Activated CD4-positive, alpha-beta memory T cell treated with anti-CD3 and anti-CD28 coated beads for 36 hours (primary cell): ENCODE measurements at regions of chr6 and their contacts with region 1.

Region 1: GRCh38 chr6:13614926-13615798 is at the start of gene NOL7:
- DNase-seq: peak; percentile 99
- H3K4me3 Mint-ChIP-seq: peak within 1 kb of the TSS; percentile 87
- H3K27ac Mint-ChIP-seq: peak within 1 kb of the TSS; percentile 92
- H3K4me1 Mint-ChIP-seq: peaks cover 44% of the 10 kb centered on the region
- H3K27me3 Mint-ChIP-seq: no peaks in the 10 kb centered on the region
- total RNA-seq, gene NOL7: 88.0 to 94.9 TPM

Region 2: GRCh38 chr6:13630499-13630898 is 15.3 kb after region 1 on chr6:
- CTCF ChIA-PET with region 1: interaction called, 12 read pairs
- POLR2A ChIA-PET with region 1: interaction called, 4 read pairs
- intact Hi-C with region 1: no loop called
- DNase-seq: no peak
- H3K4me3 Mint-ChIP-seq: no peak overlapping the region
- H3K27ac Mint-ChIP-seq: peak overlapping the region; percentile 71
- H3K4me1 Mint-ChIP-seq: peaks cover 45% of the 10 kb centered on the region
- H3K27me3 Mint-ChIP-seq: no peaks in the 10 kb centered on the region

Region 3: DNA sequence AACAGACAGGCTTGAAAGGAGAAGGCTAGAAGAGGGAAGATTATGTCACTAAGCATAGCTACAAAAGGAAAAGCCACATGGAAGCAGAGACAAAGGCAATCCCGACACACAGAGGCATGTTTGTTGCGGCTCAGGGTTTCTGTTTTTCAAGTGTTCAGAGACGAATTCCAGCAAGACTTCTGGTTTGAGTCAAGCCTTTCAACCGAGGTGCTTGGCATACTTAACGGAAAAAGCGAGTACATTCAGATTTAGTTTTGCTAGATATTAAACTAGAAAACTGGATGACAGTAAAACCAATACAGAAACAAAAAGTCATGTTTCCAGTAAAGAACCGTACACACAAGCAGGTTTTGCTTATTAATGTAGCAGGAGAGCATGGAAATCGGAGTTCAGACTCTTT is 172.0 kb after region 1 on chr6:
- CTCF ChIA-PET with region 1: interaction called, 8 read pairs
- POLR2A ChIA-PET with region 1: no interaction called
- intact Hi-C with region 1: loop called (anchors 5 kb)
- DNase-seq: peak; percentile 63
- H3K4me3 Mint-ChIP-seq: no peak overlapping the region
- H3K27ac Mint-ChIP-seq: peak overlapping the region; percentile 68
- H3K4me1 Mint-ChIP-seq: peaks cover 34% of the 10 kb centered on the region
- H3K27me3 Mint-ChIP-seq: no peaks in the 10 kb centered on the region